ENCODE measurements at regions of chr5 and their contacts with region 1.

Region 1: GRCh38 chr5:172188033-172188892 is at the start of gene STK10:
- DNase-seq: peak; percentile 86
- H3K4me3 Mint-ChIP-seq: peak within 1 kb of the TSS; percentile 99
- H3K27ac Mint-ChIP-seq: peak within 1 kb of the TSS; percentile 99
- H3K4me1 Mint-ChIP-seq: peaks cover 38% of the 10 kb centered on the region
- H3K27me3 Mint-ChIP-seq: peaks cover 8% of the 10 kb centered on the region
- total RNA-seq, gene STK10: 88.6 and 91.9 TPM in 2 replicates

Region 2: DNA sequence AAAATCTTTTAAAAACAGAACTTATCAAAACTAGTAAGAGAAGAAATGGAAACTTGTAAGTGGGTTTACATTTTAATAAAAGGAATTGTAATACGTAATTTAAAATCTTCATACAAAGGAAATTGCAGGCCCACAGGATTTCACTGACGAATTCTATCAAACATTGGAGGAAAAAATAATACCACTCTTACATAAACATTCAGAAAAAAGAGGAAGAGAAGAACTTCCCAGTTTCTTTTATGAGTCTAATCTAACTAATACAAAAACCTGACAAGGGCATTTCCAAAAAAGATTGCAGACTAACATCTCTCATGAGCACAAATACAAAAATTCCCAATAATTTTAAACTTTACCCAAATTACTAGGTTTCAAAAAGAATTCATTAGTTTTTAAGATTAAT is 1177.4 kb before region 1 on chr5:
- intact Hi-C with region 1: no loop called
- DNase-seq: no peak
- H3K4me3 Mint-ChIP-seq: no peak overlapping the region
- H3K27ac Mint-ChIP-seq: no peak overlapping the region
- H3K4me1 Mint-ChIP-seq: no peaks in the 10 kb centered on the region
- H3K27me3 Mint-ChIP-seq: no peaks in the 10 kb centered on the region

Region 3: DNA sequence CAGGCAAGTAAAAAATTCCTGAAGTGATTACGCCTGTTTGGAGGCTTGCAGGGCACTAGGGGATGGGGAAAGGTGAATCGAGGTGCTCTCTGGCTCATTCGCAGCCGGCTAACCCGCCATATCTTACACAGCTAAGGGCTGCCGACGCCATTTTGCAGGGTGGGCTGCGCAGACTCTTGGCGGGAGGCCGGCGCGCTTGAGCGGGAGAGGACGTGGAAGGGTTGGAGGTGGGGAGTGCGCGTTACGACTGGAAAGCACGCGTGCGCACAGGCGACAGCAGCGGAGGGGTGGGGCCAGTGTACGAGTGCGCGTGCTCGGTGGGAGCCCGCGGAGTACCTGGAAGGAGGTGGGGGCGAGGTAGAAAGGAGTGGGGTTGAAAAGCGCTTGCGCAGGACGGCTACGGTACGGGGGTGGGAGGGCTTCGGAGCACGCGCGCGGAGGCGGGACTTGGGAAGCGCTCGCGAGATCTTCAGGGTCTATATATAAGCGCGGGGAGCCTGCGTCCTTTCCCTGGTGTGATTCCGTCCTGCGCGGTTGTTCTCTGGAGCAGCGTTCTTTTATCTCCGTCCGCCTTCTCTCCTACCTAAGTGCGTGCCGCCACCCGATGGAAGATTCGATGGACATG is 800.8 kb before region 1 on chr5 and contains the start of gene NPM1:
- intact Hi-C with region 1: loop called (anchors 5 kb)
- DNase-seq: peak; percentile 97
- H3K4me3 Mint-ChIP-seq: peak within 1 kb of the TSS; percentile 97
- H3K27ac Mint-ChIP-seq: peak within 1 kb of the TSS; percentile 98
- H3K4me1 Mint-ChIP-seq: peaks cover 43% of the 10 kb centered on the region
- H3K27me3 Mint-ChIP-seq: peaks cover 8% of the 10 kb centered on the region
- total RNA-seq, gene NPM1: 2,729 and 2,809 TPM in 2 replicates

Region 4: DNA sequence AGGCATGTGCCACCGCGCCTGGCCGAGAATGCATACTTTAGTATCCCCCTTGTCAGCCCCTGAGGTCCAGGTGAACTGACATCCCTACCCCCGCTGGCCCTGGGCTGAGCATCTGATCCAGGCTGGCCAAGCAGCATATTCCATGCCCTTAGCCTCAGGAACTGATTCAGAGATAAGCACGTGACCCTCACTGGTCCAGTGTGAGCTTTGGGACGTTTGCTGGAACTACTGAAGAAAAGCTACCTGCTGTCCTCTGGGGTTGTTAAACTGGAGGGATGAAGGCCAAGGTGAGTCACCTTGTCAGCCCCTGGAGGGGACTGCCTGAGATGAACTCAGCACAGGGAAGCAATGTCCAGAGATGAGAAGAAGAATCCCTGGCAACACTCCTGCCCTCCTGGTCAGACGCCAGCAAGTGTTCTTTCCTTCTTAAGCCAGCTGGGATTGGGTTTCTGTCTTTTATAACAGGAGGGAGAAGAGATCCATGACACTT is 122.7 kb before region 1 on chr5:
- intact Hi-C with region 1: loop called (anchors 1 kb)
- DNase-seq: no peak
- H3K4me3 Mint-ChIP-seq: no peak overlapping the region
- H3K27ac Mint-ChIP-seq: no peak overlapping the region
- H3K4me1 Mint-ChIP-seq: peaks cover 47% of the 10 kb centered on the region
- H3K27me3 Mint-ChIP-seq: no peaks in the 10 kb centered on the region

Region 5: GRCh38 chr5:172150514-172151425 is 37.5 kb before region 1 on chr5:
- intact Hi-C with region 1: loop called (anchors 2 kb)
- DNase-seq: no peak
- H3K4me3 Mint-ChIP-seq: peak overlapping the region; percentile 63
- H3K27ac Mint-ChIP-seq: peak overlapping the region; percentile 91
- H3K4me1 Mint-ChIP-seq: peaks cover 43% of the 10 kb centered on the region
- H3K27me3 Mint-ChIP-seq: no peaks in the 10 kb centered on the region

Region 6: DNA sequence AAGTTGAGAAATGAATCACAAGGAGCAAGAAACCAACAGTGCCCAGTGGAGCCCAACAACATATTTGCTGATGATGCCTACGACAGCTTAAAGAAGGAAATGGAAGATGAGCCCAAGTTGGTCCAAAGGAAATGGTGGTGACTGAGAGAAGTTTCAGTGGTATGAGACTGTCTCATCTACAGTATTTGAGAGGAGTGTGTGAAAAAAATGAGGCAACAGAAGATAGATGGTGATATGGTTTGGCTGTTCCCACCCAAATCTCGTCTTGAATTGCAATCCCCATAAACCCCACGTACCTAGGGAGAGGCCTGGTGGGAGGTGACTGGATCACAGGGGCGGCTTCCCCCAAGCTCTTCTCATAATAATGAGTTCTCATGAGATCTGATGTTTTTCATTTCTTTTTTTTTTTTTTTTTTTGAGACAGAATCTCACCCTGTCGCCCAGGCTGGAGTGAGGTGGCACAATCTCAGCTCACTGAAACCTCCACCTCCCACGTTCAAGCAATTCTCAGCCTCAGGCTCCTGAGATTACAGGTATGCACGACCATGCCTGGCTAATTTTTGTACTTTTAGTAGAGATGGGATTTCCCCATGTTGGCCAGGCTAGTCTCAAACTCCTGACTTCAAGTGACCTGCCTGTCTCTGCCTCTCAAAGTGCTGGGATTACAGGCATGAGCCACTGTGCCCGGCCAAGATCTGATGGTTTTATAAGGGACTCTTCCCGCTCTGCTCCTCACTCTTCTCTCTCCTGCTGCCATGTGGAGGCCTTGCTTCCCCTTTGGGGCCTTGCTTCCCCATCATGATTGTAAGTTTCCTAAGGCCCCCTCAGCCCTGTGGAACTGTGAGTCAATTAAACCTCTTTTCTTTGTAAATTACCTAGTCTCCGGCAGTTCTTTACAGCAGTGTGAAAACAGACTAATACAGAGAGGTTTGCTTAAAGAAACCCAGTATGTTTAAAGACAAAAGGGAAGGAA is 35.9 kb after region 1 on chr5:
- intact Hi-C with region 1: loop called (anchors 1 kb)
- DNase-seq: no peak
- H3K4me3 Mint-ChIP-seq: no peak overlapping the region
- H3K27ac Mint-ChIP-seq: peak overlapping the region; percentile 87
- H3K4me1 Mint-ChIP-seq: peaks cover 28% of the 10 kb centered on the region
- H3K27me3 Mint-ChIP-seq: peaks cover 5% of the 10 kb centered on the region

Region 7: DNA sequence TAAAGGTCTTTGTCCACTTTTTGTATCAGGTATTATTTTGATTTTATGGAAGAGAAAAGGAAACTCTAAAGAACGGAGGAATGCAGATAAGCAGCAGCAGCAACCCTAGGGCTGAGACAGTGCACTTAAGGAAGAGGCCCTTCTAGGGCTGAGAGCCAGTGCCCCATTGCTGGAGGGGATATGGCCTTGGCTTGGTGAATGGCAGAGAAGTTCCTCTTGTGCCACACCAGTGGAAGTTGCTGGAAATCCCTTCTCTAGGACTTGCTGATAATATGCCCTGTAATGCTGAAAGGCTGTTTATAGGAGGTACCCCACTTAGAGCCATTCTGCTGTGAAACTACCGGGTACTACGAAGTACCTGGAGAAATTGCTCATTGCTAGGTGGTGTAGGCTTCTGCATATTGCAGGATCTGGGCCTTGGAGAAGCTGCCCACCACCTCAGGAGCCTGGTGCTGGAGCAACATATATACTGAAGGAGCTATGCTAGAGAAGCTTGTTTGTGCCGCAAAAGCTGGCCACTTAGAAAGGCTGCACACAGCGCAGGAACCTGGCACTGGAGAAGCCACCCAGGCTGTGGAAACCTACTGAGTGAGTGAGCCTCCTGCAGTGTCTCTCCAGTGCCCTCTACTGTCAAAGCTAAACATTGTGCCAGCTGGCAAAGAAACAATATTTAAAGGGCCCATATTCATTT is 104.9 kb after region 1 on chr5:
- intact Hi-C with region 1: loop called (anchors 1 kb)
- DNase-seq: peak; percentile 51
- H3K4me3 Mint-ChIP-seq: no peak overlapping the region
- H3K27ac Mint-ChIP-seq: no peak overlapping the region
- H3K4me1 Mint-ChIP-seq: peaks cover 5% of the 10 kb centered on the region
- H3K27me3 Mint-ChIP-seq: peaks cover 27% of the 10 kb centered on the region

Region 8: GRCh38 chr5:172764849-172765765 is 576.8 kb after region 1 on chr5:
- intact Hi-C with region 1: loop called (anchors 5 kb)
- DNase-seq: peak; percentile 95
- H3K4me3 Mint-ChIP-seq: peak overlapping the region; percentile 76
- H3K27ac Mint-ChIP-seq: peak overlapping the region; percentile 87
- H3K4me1 Mint-ChIP-seq: peaks cover 38% of the 10 kb centered on the region
- H3K27me3 Mint-ChIP-seq: peaks cover 6% of the 10 kb centered on the region

Region 9: DNA sequence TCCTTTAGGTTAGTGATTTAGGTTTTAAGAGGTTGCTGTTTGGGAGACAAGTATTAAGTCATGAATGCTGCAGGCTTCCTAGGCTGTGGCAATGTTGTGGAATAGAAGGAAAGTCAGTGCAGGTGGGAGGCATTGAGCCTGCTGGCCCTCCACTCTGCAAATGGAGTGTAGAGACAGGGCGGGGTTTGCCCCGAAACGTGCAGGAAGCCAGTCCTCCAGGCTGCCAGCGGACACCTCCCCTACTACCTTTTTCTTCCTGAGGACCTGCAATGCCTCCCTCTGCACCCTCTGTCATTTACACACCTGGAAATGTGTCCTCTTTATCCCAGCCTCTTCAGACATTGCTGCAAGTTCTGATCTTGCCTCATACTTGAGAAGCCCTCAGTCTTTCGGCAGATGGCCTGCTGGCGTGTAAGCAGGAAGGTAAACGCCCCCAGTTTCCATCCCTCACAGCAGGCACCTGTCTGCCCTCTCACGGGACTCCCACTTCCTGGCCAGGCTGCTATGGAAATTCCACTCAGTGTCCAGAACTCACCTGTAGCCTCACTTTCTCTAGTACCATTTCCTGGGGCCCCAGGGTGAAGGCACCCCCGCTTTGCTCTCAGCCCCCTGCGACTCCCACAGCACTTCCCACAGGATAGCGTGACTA is 1509.8 kb after region 1 on chr5:
- intact Hi-C with region 1: no loop called
- DNase-seq: no peak
- H3K4me3 Mint-ChIP-seq: no peak overlapping the region
- H3K27ac Mint-ChIP-seq: no peak overlapping the region
- H3K4me1 Mint-ChIP-seq: no peaks in the 10 kb centered on the region
- H3K27me3 Mint-ChIP-seq: no peaks in the 10 kb centered on the region